H1 (cell line): ENCODE measurements at regions of chr12 and their contacts with region 1.

Region 1: GRCh38 chr12:6778574-6779550 is 6.5 kb downstream of the LAG3 start:
- DNase-seq: peak; percentile 82 to 96
- H3K4me3 ChIP-seq: peak overlapping the region; percentile 29 to 67 (median 54)
- H3K27ac ChIP-seq: no peak overlapping the region
- H3K4me1 ChIP-seq: peaks cover 5 to 18% (median 13%) of the 10 kb centered on the region in 4 experiments
- H3K27me3 ChIP-seq: peaks cover 0 to 23% (median 17%) of the 10 kb centered on the region in 4 experiments; a peak in 5 of 7 replicates
- CTCF ChIP-seq: peak in 2 of 3 experiments; percentile 95 to 98; a peak in 3 of 4 replicates
- EP300 ChIP-seq: peak in 1 of 2 experiments; percentile 17; a peak in 1 of 3 replicates
- POLR2A ChIP-seq: no peak
- RAD21 ChIP-seq: peak; percentile 96 to 99

Region 2: DNA sequence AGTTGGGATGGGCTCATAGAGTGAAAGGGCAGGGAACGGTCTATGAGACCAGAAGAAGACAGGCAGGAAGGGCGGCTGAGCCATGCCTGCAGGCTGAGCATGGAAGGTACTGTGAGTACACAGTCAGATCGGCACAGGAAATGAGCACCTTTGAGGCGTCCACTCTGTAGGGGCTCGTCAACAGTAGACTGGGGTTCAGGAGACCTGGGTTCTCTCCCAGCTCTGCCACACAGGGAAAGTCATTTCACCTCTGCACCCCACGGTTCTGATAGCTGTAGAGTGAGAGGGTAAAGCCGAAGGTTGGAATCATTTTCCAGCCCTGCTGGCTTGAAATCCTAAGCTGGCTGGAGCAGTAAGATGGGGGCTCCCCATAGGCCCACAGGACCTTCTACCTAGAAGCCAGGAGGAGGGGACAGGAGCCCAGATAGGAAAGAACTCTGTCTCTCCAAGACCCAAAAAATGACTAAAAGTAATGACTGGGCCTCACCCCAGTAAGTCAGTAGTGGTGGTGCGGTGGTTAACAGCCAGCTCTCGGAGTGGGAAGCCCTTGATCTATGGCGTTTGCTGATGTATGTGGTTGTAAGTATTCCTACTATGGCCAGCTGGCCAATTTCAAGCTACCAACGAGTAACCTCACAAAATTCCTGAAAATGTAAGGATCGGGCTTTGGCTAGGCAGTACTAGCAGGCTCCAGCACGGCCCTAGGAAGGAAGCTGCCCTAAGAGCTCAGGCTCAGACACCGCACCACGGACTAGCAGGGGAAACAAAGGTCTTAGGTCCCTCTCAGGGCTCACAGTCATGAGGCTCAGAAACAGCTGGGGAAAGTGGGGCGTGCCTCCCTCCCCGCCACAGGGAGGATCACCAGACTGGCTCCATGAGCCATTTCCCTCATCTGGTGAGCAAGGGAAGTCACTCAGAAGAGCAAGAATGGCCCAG is 344.4 kb before region 1 on chr12:
- CTCF ChIA-PET with region 1: no interaction called
- POLR2A ChIA-PET with region 1: no interaction called
- DNase-seq: no peak
- H3K4me3 ChIP-seq: no peak overlapping the region
- H3K27ac ChIP-seq: no peak overlapping the region
- H3K4me1 ChIP-seq: peaks cover 0 to 8% (median under 1%) of the 10 kb centered on the region in 4 experiments; a peak in 3 of 7 replicates
- H3K27me3 ChIP-seq: no peaks in the 10 kb centered on the region
- CTCF ChIP-seq: peak in 1 of 3 experiments; percentile 2; a peak in 1 of 4 replicates
- EP300 ChIP-seq: no peak
- POLR2A ChIP-seq: no peak
- RAD21 ChIP-seq: no peak

Region 3: GRCh38 chr12:6524648-6525047 is 254.2 kb before region 1 on chr12:
- CTCF ChIA-PET with region 1: no interaction called
- POLR2A ChIA-PET with region 1: no interaction called
- DNase-seq: no peak
- H3K4me3 ChIP-seq: no peak overlapping the region
- H3K27ac ChIP-seq: no peak overlapping the region
- H3K4me1 ChIP-seq: peaks cover 0 to 1% (median 0%) of the 10 kb centered on the region in 4 experiments; a peak in 1 of 7 replicates
- H3K27me3 ChIP-seq: no peaks in the 10 kb centered on the region
- CTCF ChIP-seq: no peak
- EP300 ChIP-seq: no peak
- POLR2A ChIP-seq: no peak
- RAD21 ChIP-seq: no peak

Region 4: DNA sequence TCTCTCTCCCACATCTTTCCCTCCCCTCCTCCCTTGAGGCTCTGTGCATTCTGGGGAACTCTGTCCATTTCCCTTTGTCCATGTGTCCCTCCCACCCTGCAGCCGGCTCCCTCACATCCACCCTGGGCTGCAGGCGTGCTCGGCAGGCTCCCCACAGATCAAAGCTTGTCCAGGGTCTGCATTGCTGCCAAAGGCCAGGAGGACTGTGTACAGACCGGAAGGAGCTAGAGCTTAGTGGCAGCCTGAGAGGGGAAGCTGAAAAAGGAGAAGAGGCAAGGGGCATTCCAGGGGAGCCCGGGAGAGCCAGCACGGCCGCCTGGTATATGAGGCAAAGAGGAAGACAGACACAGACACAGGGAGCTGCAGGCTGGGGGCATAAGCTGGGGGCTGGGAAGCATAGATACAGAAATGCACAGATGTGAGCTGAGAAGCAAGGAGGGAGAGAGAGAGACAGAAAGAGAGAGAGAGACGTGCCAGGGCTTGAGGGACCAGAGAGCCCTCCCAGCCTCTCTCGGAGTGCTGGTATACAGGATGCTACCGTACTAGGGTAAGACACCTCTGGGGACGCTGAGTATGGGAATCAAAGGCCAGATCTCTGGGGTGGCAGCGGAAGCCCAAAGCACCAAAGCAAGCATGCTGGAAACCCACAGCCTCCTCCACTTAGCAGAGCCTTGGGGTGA is 13.8 kb after region 1 on chr12:
- CTCF ChIA-PET with region 1: interaction called, 32 read pairs
- POLR2A ChIA-PET with region 1: interaction called, 10 read pairs
- DNase-seq: no peak
- H3K4me3 ChIP-seq: no peak overlapping the region
- H3K27ac ChIP-seq: no peak overlapping the region
- H3K4me1 ChIP-seq: peaks cover 0 to 9% (median under 1%) of the 10 kb centered on the region in 4 experiments; a peak in 3 of 7 replicates
- H3K27me3 ChIP-seq: 0 out of 7 replicates have a peak, but pooled peaks cover 0 to 3% (median 0%) of the 10 kb centered on the region in 4 experiments
- CTCF ChIP-seq: no peak
- EP300 ChIP-seq: no peak
- POLR2A ChIP-seq: no peak
- RAD21 ChIP-seq: no peak

Region 5: DNA sequence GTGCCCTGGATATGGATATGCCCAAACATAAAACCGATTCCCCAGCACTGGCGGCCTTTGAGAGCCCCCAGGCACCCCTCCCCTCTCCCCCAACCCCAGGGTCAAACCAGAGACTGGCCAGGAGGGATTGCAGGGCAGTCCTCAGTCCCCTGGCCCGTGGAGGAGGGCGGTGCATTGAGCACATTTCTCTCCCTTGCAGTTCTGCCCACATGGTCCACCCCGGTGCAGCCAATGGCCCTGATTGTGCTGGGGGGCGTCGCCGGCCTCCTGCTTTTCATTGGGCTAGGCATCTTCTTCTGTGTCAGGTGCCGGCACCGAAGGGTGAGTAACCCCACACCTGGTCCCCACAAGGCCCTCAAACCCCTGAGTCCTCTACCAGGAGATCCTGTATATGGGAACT is 39.4 kb after region 1 on chr12:
- CTCF ChIA-PET with region 1: interaction called, 532 read pairs
- POLR2A ChIA-PET with region 1: interaction called, 13 read pairs
- DNase-seq: peak in 1 of 2 experiments; percentile 77
- H3K4me3 ChIP-seq: peak overlapping the region in 3 of 4 experiments; percentile 27 to 46 (median 27); a peak in 5 of 8 replicates
- H3K27ac ChIP-seq: no peak overlapping the region
- H3K4me1 ChIP-seq: peaks cover 4 to 46% (median 27%) of the 10 kb centered on the region in 4 experiments
- H3K27me3 ChIP-seq: peaks cover 0 to 6% (median 1%) of the 10 kb centered on the region in 4 experiments; a peak in 4 of 7 replicates
- CTCF ChIP-seq: no peak
- EP300 ChIP-seq: peak; percentile 4 to 56; a peak in 2 of 3 replicates
- POLR2A ChIP-seq: no peak
- RAD21 ChIP-seq: no peak